Transverse colon (tissue), 4 donors: ENCODE measurements at regions of chr14 and their contacts with region 1.

Region 1: DNA sequence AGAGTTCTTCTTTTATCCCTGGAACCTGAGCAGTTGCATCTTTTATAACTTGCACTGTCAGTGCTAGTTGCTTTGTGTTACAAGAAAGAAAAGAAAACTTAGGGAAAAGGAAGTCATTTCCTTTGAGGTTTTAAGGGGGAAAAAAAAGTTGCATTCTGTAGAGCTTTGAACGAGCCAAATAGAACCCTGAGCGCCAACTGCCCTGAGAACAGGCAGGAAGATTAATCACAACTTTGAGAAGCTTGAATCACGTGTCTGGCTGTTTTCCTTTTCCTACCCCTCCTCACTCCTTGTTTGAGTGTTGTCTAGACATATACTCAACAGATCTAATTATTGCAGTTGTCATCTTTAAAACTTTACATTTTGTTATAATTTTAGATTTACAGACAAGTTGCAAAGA is 12.5 kb downstream of the PCNX1 start:
- DNase-seq: no peak
- H3K4me3 ChIP-seq: no peak overlapping the region
- H3K27ac ChIP-seq: no peak overlapping the region
- H3K4me1 ChIP-seq: peaks cover 8 to 34% (median 13%) of the 10 kb centered on the region in 4 donors
- H3K27me3 ChIP-seq: no peaks in the 10 kb centered on the region
- CTCF ChIP-seq: no peak
- EP300 ChIP-seq: no peak
- POLR2A ChIP-seq: no peak

Region 2: DNA sequence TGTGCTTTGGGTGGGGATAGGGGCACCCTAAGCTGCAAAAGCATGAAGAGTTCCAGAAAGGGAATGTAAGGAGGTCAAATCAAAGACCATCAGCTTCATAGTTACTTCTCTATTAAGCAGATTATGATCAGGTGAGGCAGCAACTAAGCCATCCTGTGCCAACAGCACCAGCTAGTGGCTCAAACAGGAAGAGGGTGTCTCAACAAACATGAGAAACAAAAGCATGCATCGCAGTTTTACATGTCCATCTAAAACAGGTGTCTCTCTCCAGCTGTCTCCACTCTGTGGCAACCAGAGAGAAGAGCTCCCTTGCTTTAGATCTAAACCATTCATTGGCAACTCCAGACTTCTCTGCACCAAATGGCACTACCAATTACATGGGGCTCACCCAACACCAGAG is 1993.5 kb before region 1 on chr14:
- in situ Hi-C with region 1: no loop called
- intact Hi-C with region 1: loop called (anchors 10 kb)
- DNase-seq: no peak
- H3K4me3 ChIP-seq: no peak overlapping the region
- H3K27ac ChIP-seq: peak overlapping the region; percentile 69 to 99 (median 96)
- H3K4me1 ChIP-seq: peaks cover 21 to 56% (median 35%) of the 10 kb centered on the region in 4 donors
- H3K27me3 ChIP-seq: no peaks in the 10 kb centered on the region
- CTCF ChIP-seq: peak in 3 of 5 experiments; percentile 18 to 33 (median 18)
- EP300 ChIP-seq: no peak
- POLR2A ChIP-seq: no peak

Region 3: DNA sequence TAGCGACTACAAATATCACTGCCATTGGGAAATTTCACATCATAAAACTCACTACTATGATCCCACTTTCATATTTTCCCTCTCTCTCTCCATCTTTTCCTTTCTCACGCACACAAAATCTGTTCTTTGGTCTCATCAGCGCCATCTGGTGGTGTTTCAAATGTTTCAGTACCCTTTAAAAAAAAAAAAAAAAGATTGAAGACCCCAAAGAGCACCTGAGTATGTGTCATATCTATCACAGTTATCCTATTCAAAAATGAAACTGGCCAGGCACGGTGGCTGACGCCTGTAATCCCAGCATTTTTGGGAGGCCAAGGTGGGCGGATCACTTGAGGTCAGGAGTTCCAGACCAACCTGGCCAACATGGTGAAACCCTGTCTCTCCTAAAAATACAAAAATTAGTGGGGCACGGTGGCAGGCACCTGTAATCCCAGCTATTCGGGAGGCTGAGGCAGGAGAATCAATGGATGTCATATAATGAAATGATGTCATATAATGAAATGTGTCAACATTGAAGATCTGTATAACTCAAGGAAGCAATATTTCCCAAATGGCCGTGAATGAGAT is 205.6 kb before region 1 on chr14:
- in situ Hi-C with region 1: no loop called
- intact Hi-C with region 1: no loop called
- DNase-seq: peak; percentile 14
- H3K4me3 ChIP-seq: no peak overlapping the region
- H3K27ac ChIP-seq: no peak overlapping the region
- H3K4me1 ChIP-seq: peaks cover 0 to 5% (median 0%) of the 10 kb centered on the region in 4 donors
- H3K27me3 ChIP-seq: no peaks in the 10 kb centered on the region
- CTCF ChIP-seq: peak; percentile 58 to 70 (median 67)
- EP300 ChIP-seq: no peak
- POLR2A ChIP-seq: no peak

Region 4: DNA sequence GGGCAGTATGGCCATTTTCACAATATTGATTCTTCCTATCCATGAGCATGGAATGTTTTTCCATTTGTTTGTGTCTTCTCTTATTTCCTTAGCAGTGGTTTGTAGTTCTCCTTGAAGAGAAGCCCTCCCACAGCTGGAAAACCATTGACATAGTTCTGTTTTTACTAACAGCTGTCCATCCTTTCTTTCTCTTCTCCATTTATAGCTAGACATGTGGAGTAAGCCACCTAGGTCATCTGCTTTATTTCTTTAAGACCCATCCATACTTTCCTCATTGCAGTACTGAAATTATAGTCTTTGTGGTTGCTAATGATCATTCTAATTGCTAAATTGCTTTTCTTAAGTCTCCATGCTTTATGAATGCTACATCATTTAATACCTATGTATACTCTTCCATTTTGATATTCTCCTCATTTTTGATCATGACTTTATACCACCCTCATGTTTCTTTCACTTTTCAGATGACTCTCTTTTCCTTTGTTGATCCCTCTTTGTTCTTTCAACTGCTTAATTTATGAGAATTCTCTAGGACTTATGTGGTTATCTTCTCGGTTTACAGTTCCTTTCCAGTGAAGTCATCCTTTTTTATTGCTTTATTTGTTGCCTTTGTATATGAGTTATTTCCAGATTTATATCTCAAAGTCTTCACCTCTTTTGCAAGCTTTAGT is 101.7 kb after region 1 on chr14:
- in situ Hi-C with region 1: no loop called
- intact Hi-C with region 1: no loop called
- DNase-seq: no peak
- H3K4me3 ChIP-seq: no peak overlapping the region
- H3K27ac ChIP-seq: no peak overlapping the region
- H3K4me1 ChIP-seq: peaks cover 0 to 5% (median 0%) of the 10 kb centered on the region in 4 donors
- H3K27me3 ChIP-seq: no peaks in the 10 kb centered on the region
- CTCF ChIP-seq: no peak
- EP300 ChIP-seq: no peak
- POLR2A ChIP-seq: no peak